Dorsolateral prefrontal cortex (tissue), 120 donors: ENCODE measurements at regions of chr9 and their contacts with region 1.

Region 1: GRCh38 chr9:108933718-108934322 is at the start of gene ELP1:
- DNase-seq: peak; percentile 90 to 95 (median 94)
- H3K4me3 ChIP-seq: peak within 1 kb of the TSS; percentile 76 to 100 (median 94)
- H3K27ac ChIP-seq: peak within 1 kb of the TSS; percentile 76 to 97 (median 93)
- H3K27me3 ChIP-seq: no peaks in the 10 kb centered on the region
- CTCF ChIP-seq: peak in 40 of 56 donors; percentile 9 to 55 (median 36)
- total RNA-seq, gene ELP1: 30.6 to 86.2 (median 48.5) TPM

Region 2: DNA sequence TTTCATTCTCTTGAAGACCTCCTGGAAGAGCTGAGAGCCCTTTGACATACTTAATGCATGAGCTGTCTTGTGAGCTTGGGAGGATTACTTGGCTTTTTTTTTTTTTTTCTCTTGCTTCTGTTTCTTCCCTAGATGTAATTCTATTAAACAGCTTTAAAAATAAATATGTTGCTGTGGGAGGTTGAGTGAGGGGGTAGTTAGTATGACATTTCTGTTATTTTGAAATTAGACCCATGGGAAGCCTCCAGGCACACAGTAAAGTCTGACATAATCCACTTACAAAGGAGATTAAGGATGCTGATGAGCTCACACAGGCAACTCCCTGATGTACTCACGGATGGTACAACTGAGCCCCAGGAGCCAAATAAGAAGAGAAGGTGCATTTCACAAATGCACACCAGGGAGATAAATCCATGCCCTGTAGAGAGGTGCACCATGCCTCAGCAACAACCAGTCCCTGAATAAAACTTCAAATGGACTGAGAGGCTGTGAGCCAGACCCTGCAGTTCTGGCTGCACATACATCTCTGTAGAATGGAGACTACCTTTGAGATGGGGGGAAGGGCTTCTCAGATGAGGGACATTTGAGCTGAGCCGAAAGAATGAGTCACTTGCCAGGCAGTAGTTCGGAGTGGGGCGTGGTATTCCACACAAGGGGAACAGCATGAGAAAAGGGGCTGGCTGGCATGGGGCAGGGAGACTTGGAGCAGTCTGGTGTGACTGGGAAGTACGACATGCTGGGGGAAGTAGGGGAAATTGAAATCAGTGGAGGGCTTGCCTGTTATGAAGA is 146.7 kb before region 1 on chr9:
- intact Hi-C with region 1: loop called in 1 of 2 experiments (anchors 10 kb)
- DNase-seq: no peak
- H3K4me3 ChIP-seq: no peak overlapping the region
- H3K27ac ChIP-seq: no peak overlapping the region
- H3K27me3 ChIP-seq: no peaks in the 10 kb centered on the region
- CTCF ChIP-seq: no peak

Region 3: GRCh38 chr9:109119439-109120203 is 185.8 kb after region 1 on chr9 and contains the start of gene TMEM245:
- intact Hi-C with region 1: loop called (anchors 5 to 10 kb)
- DNase-seq: peak; percentile 94 to 99 (median 98)
- H3K4me3 ChIP-seq: peak within 1 kb of the TSS; percentile 66 to 99 (median 89)
- H3K27ac ChIP-seq: peak within 1 kb of the TSS in 57 of 59 donors; percentile 49 to 95 (median 86)
- H3K27me3 ChIP-seq: no peaks in the 10 kb centered on the region
- CTCF ChIP-seq: peak in 37 of 56 donors; percentile 4 to 53 (median 24)
- total RNA-seq, gene TMEM245: 53.4 to 104 (median 72.3) TPM